ENCODE measurements at regions of chr4 and their contacts with region 1.

Region 1: GRCh38 chr4:173013232-173013930 is 155.2 kb upstream of the GALNT7 start:
- DNase-seq: no peak
- H3K4me3 ChIP-seq: no peak overlapping the region
- H3K27ac ChIP-seq: no peak overlapping the region
- H3K27me3 ChIP-seq: no peaks in the 10 kb centered on the region
- CTCF ChIP-seq: peak; percentile 67

Region 2: DNA sequence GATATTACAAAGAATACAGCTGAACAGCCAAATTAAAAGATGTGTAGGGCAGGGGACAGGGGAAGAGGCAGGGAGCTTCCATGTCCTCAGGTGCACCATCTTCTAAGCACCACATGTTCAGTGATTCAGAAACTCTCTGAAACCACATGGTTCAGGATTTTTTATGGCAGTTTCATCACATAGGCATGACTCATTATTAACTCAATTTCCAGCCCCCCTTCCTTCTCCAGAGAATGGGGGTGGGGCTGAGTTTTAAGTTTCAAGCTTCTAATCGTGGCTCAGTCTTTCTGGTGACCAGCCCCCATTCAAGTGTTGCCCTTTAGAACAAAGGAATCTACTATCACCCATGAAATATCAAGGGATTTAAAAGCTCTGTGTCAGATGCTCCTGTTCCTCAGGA is 162.5 kb before region 1 on chr4:
- CTCF ChIA-PET with region 1: interaction called, 12 read pairs
- POLR2A ChIA-PET with region 1: no interaction called
- DNase-seq: peak; percentile 78
- H3K4me3 ChIP-seq: no peak overlapping the region
- H3K27ac ChIP-seq: peak overlapping the region; percentile 50
- H3K27me3 ChIP-seq: no peaks in the 10 kb centered on the region
- CTCF ChIP-seq: no peak

Region 3: GRCh38 chr4:173039617-173040577 is 26.5 kb after region 1 on chr4:
- CTCF ChIA-PET with region 1: interaction called, 17 read pairs
- POLR2A ChIA-PET with region 1: no interaction called
- DNase-seq: no peak
- H3K4me3 ChIP-seq: no peak overlapping the region
- H3K27ac ChIP-seq: no peak overlapping the region
- H3K27me3 ChIP-seq: peaks cover 18% of the 10 kb centered on the region
- CTCF ChIP-seq: no peak

Region 4: DNA sequence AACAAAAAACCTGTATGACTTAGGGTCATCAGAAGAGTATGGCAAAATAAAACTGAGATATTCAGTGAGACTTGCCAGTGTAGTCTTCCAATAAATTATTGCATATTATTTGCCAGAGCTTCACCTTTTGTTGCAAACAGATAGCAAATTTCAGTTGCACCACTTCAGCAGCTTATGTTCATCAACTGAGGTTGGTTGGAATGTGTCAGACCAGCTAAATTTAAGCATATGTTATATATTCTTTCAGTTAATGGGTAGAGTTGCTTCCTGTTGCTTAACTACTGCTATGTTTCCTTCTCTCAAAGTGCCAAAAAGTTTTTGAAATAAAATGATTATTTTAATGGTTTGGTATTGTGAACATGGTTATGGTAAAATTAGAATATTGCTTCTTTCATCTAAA is 216.7 kb after region 1 on chr4:
- CTCF ChIA-PET with region 1: interaction called, 13 read pairs
- POLR2A ChIA-PET with region 1: no interaction called
- DNase-seq: no peak
- H3K4me3 ChIP-seq: no peak overlapping the region
- H3K27ac ChIP-seq: no peak overlapping the region
- H3K27me3 ChIP-seq: no peaks in the 10 kb centered on the region
- CTCF ChIP-seq: no peak

Region 5: DNA sequence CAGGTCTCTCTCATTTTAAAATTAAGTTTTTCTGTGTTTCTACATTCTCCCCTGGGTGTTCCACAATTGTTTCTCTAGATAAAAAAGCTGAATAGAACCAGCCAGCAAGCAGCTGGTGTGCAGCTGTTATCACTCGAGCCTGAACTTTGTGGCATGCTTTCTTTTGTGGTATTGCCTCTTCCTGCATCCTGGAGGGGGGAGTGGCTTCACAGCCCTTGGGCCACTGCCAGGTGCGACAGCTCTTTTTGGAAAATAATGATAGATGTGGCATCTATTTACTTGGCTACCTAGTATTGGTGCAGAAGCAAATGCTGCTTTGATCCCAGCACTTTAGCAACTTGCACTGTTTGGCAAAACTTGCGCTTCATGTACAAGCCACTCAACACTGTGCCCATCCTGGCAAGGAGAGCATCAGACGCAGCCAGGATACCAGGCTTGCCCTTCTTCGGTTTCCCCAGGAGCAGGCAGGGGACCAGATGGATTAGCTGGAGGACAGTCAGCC is 251.4 kb after region 1 on chr4:
- CTCF ChIA-PET with region 1: interaction called, 110 read pairs
- POLR2A ChIA-PET with region 1: no interaction called
- DNase-seq: peak; percentile 49
- H3K4me3 ChIP-seq: no peak overlapping the region
- H3K27ac ChIP-seq: no peak overlapping the region
- H3K27me3 ChIP-seq: no peaks in the 10 kb centered on the region
- CTCF ChIP-seq: no peak

Region 6: GRCh38 chr4:173301518-173302201 is 288.3 kb after region 1 on chr4:
- CTCF ChIA-PET with region 1: interaction called, 172 read pairs
- POLR2A ChIA-PET with region 1: interaction called, 5 read pairs
- DNase-seq: peak; percentile 16
- H3K4me3 ChIP-seq: no peak overlapping the region
- H3K27ac ChIP-seq: no peak overlapping the region
- H3K27me3 ChIP-seq: no peaks in the 10 kb centered on the region
- CTCF ChIP-seq: peak; percentile 74

Region 7: DNA sequence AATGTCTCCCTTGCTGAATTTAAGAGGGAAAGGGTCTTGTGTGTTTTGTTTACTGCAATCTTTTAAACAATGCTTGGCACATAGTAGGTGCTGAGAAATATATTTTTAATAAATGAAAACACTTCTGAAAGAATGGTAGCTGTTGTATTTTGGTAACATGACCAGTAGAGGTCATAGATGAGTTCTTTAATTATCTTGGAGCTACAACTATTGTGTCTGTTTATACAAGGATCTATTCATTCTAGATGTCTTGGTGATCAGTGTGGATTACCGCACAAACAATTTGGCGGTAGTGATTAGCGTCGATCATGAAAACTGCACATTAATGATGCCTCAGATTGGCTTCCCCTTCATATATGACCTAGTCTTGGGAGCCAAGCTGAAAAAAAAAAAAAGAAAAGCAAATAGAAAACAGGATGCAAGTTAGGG is 407.0 kb after region 1 on chr4:
- CTCF ChIA-PET with region 1: interaction called, 14 read pairs
- POLR2A ChIA-PET with region 1: interaction called, 3 read pairs
- DNase-seq: no peak
- H3K4me3 ChIP-seq: no peak overlapping the region
- H3K27ac ChIP-seq: no peak overlapping the region
- H3K27me3 ChIP-seq: no peaks in the 10 kb centered on the region
- CTCF ChIP-seq: peak; percentile 50

Measured in AG04450 (cell line).